ENCODE measurements at regions of chr18 and their contacts with region 1.

Region 1: DNA sequence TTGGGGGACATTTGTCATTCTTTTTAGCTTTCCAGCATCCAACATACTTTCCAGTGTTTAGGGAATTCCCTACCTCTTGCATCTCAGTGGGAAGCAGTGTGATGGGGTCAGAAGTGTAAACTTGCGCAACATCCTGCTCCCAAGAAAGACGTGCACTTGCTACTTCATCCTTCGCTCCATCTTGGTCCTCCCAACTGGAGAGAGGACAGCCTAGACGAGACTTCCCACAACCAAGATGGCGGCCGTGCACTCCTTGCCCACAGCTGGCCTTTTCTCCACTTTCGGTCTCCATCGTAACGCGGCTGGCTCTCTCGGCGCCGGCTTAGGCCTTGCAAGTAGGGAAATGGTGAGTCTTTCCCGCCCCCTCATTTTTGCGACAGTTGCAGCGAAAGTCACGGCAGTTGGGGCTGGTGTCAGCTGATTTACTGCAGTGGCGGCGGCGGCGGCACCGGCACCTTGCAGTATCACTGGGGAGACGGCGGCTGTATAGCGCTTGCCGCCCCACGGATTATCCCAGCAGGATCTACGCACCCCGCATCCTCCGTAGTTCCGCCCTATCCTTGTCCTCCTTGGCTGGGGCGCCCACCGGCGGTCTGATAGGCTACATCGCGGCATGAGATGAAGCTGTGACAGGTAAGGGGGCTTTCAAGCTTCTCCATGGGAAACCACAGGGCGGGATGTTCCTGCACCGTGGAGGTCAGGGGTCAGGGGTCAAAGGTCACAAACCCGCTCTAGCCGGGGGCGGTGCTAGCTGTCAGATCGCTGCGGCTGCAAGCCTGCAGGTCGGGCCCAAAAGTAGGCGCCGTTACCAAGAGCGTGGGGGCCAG is at the start of gene WDR7:
- DNase-seq: peak; percentile 96
- H3K4me3 Mint-ChIP-seq: peak within 1 kb of the TSS; percentile 91
- H3K27ac Mint-ChIP-seq: peak within 1 kb of the TSS; percentile 95
- H3K4me1 Mint-ChIP-seq: peaks cover 67% of the 10 kb centered on the region
- H3K27me3 Mint-ChIP-seq: no peaks in the 10 kb centered on the region
- total RNA-seq, gene WDR7: 29.1 to 33.0 TPM

Region 2: DNA sequence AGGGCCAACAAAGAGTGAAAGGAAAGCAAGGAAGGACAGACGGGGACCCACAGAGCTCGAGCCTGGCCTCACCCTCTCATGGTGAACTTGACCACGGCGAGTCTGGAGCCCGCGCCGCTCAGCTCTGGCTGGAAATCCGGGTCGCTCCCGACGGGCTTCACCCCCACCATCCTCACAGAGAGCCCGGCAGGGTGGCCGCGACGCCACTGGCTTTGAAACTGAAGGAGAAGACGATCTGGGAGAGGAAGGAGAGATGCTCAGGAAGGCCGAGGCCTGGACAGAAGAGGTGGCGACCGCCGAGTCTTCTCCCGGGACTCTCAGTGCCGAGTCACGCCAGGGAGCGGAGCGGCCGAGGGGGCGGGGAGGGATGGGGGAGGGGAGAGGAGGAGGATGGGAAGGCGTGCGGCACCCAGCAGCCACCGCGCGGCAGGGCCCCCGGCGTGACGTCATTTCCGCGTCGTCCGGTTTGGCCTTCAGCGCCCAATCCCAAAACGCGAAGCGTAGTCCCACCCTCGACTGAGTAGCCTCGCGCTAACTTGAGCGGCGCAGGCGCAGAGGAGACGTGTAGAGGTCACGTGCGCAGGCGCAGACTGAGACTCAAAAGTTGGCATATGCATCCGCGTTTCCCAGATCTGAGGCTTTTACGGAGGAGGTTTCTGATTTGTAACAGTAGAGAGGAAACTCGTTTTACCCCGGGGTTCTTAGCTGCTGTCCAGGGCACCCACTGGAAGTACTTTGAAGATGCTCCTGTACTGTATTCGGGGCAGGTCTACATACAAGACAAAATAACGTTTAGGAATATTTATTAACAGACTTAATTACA is 12.7 kb before region 1 on chr18 and contains the start of gene TXNL1:
- CTCF ChIA-PET with region 1: interaction called, 35 read pairs
- POLR2A ChIA-PET with region 1: interaction called, 114 read pairs
- DNase-seq: peak; percentile 99
- H3K4me3 Mint-ChIP-seq: peak within 1 kb of the TSS; percentile 100
- H3K27ac Mint-ChIP-seq: peak within 1 kb of the TSS; percentile 97
- H3K4me1 Mint-ChIP-seq: peaks cover 42% of the 10 kb centered on the region
- H3K27me3 Mint-ChIP-seq: no peaks in the 10 kb centered on the region
- total RNA-seq, gene TXNL1: 50.2 to 55.5 TPM

Region 3: GRCh38 chr18:56702946-56703345 is 51.8 kb after region 1 on chr18:
- CTCF ChIA-PET with region 1: interaction called, 16 read pairs
- POLR2A ChIA-PET with region 1: interaction called, 5 read pairs
- DNase-seq: no peak
- H3K4me3 Mint-ChIP-seq: no peak overlapping the region
- H3K27ac Mint-ChIP-seq: no peak overlapping the region
- H3K4me1 Mint-ChIP-seq: peaks cover 2% of the 10 kb centered on the region
- H3K27me3 Mint-ChIP-seq: no peaks in the 10 kb centered on the region

Region 4: DNA sequence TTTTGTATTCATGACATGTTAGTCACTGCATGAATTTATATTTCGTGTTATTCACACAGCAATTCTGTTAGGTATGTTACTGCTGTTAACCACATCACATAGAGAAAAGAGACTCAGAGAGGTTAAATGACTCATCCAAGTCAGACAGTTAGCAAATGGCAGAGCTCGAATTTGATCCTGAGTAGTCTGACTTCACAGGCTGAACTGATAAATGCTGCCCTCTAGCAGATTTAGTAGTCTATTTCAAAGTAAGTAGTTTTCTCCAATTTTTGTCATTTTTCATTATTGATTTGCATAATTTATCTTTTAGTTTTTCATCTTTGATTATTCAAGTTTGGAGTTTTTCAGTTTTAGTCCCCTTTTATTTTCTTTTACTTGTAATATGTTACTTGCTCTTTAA is 58.3 kb after region 1 on chr18:
- CTCF ChIA-PET with region 1: interaction called, 10 read pairs
- POLR2A ChIA-PET with region 1: interaction called, 3 read pairs
- DNase-seq: peak; percentile 34
- H3K4me3 Mint-ChIP-seq: no peak overlapping the region
- H3K27ac Mint-ChIP-seq: no peak overlapping the region
- H3K4me1 Mint-ChIP-seq: peaks cover 6% of the 10 kb centered on the region
- H3K27me3 Mint-ChIP-seq: no peaks in the 10 kb centered on the region

Measured in activated CD4-positive, alpha-beta memory T cell treated with anti-CD3 and anti-CD28 coated beads, Interleukin-2, amount 10 ng/mL, durations not matched to agents 7 days and 5 days (primary cell).